Activated CD4-positive, alpha-beta T cell treated with anti-CD3 and anti-CD28 coated beads for 36 hours (primary cell): ENCODE measurements at regions of chr16 and their contacts with region 1.

Region 1: GRCh38 chr16:86285938-86286921 is 224.1 kb upstream of the FOXF1 start:
- DNase-seq: no peak
- ATAC-seq: no peak
- H3K4me3 Mint-ChIP-seq: no peak overlapping the region
- H3K27ac Mint-ChIP-seq: no peak overlapping the region
- H3K4me1 Mint-ChIP-seq: no peaks in the 10 kb centered on the region
- H3K27me3 Mint-ChIP-seq: peaks cover 57% of the 10 kb centered on the region

Region 2: GRCh38 chr16:86498661-86499439 is 212.6 kb after region 1 on chr16:
- CTCF ChIA-PET with region 1: no interaction called
- POLR2A ChIA-PET with region 1: no interaction called
- intact Hi-C with region 1: loop called in 1 of 2 experiments (anchors 5 kb)
- DNase-seq: no peak
- ATAC-seq: no peak
- H3K4me3 Mint-ChIP-seq: no peak overlapping the region
- H3K27ac Mint-ChIP-seq: no peak overlapping the region
- H3K4me1 Mint-ChIP-seq: peaks cover 5% of the 10 kb centered on the region
- H3K27me3 Mint-ChIP-seq: peaks cover 72% of the 10 kb centered on the region